ENCODE measurements at regions of chr5 and their contacts with region 1.

Region 1: DNA sequence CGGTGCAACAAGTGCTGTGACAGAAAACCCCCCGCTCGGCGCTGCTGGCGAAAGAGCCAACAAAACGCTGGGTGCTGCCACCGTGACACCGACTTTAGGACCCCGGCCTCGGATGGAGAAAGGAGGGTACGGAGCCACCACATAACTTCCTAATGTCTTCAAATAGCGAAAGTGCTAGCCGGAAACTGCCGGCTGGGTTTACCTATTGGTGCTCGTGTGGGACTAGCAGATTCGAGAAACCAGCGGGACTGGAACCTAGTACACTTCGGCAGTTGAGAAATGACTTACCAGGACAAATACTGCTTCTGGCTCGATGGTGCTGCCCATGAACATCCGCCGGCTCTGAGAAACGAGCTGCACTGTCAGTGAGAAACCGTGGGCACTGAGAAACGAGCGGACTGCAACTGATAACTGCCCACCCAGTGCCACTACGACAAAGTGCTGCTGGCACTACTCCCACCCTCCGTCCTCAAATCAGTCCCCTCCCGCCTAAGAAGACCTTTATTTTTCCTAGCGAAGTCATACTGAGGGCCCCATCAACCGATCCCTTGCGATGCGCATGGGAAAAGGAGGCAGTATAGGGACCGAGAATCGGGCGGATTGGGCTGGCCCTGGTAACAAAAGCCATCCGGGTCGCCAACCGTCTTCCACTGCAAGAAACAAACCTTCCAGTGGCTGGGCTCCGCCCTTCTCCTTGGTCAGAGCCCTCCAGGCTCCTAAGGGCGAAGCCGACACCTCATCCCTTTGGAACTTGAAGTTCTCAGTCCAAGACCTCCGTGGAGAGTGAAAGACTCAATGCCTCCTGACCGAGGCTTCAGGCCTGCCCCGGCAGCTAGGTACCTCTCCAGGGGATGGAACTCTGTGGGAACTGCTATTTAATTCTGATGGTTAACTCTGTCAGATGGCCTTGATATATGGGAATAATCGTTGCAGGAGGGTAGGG is 27.0 kb upstream of the ANXA2R start:
- DNase-seq: peak; percentile 83 to 93
- ATAC-seq: peak; percentile 68 to 84 (median 72)
- H3K4me3 ChIP-seq: peak overlapping the region; percentile 70 to 93 (median 80)
- H3K27ac ChIP-seq: peak overlapping the region; percentile 98 to 100 (median 100)
- H3K4me1 ChIP-seq: peaks cover 6 to 49% (median 32%) of the 10 kb centered on the region in 9 donors
- H3K27me3 ChIP-seq: no peaks in the 10 kb centered on the region
- CTCF ChIP-seq: peak in 1 of 9 donors; percentile 16

Region 2: DNA sequence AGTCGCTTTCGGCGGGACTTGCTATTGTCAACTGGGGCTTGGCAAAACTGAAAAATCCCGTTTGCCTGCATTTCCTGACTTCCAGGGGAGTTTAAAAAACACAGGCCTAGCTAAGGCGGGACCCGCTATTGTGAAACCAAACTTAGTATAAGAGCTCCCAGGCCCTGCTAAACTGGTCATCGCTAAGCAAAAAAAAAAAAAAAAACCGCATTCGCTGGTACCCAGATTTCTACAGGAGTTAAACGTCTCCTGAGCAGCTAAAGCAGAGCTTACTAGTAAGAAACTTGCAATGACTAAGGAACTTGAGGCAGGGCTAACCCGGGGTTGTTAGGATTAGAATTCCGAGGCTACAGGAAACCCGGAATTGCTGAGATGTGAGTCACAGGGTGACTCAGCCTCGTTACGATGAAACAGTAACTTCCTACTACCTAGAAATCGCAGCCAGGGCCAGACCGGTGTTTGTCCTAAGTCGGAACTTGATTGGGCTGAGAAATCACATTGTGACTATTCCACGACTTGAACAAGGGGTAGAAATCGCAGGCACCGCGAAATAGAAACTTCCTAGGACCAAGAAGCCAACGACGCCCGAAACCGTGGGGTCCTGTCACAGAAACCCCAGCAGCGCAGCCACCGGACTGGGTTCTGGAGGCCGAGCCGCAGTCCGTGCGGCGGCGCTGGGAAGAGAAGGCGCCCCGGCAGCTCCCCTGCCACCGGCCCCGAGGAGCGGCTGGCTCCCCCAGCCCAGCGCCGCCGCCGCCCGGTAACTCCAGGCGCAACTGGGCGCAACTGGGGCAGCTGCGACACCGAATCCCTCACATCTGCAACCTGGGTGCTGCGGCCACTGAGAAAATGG is 116.4 kb before region 1 on chr5:
- intact Hi-C with region 1: loop called in 1 of 10 experiments (anchors 2 kb)
- DNase-seq: peak; percentile 29 to 81
- ATAC-seq: peak; percentile 82 to 92 (median 86)
- H3K4me3 ChIP-seq: peak overlapping the region; percentile 32 to 74 (median 60)
- H3K27ac ChIP-seq: peak overlapping the region; percentile 78 to 99 (median 94)
- H3K4me1 ChIP-seq: peaks cover 0 to 50% (median 25%) of the 10 kb centered on the region in 9 donors
- H3K27me3 ChIP-seq: peaks cover 12 to 99% (median 89%) of the 10 kb centered on the region in 7 donors
- CTCF ChIP-seq: no peak

Region 3: DNA sequence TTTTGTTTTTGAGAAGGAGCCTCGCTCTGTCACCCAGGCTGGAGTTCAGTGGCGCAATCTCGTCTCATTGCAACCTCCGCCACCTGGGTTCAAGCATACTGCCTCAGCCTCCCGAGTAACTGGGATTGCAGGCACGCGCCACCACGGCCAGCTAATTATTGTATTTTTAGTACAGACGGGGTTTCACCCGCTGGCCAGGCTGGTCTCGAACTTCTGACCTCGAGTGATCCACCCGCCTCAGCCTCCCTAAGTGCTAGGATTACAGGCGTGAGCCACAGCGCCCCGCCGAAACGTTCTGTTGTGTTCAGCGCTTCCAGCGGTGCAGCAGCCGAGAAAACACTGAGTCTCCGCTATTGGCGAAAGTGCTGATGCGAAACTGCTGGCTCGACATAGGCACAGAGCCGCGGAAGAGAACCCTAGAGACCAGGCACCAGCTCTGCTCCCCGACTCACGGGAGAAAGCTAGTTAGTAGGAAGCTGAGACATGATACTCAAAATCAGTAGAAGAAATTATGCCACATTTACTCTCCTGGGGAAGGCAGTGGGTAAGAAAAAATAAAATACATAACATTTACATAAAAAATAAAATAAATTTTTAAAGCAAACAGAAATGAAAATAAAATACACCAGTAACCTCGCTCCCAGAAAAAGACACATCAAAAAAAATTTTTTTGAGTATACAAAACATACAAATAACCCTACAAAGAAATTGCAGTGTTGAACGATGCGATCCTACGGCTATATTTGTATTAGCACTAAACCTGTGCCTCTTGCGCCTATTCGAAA is 58.5 kb before region 1 on chr5:
- intact Hi-C with region 1: loop called in 1 of 10 experiments (anchors 2 kb)
- DNase-seq: peak; percentile 85 to 92
- ATAC-seq: peak; percentile 81 to 93 (median 88)
- H3K4me3 ChIP-seq: peak overlapping the region; percentile 34 to 67 (median 55)
- H3K27ac ChIP-seq: peak overlapping the region; percentile 72 to 97 (median 90)
- H3K4me1 ChIP-seq: peaks cover 0 to 43% (median 10%) of the 10 kb centered on the region in 9 donors
- H3K27me3 ChIP-seq: peaks cover 0 to 74% (median 57%) of the 10 kb centered on the region in 7 donors
- CTCF ChIP-seq: peak in 1 of 9 donors; percentile 17

Region 4: GRCh38 chr5:43040287-43041098 is 26.6 kb before region 1 on chr5 and contains the start of gene ANXA2R:
- intact Hi-C with region 1: loop called in 6 of 10 experiments (anchors 1 to 2 kb)
- DNase-seq: peak; percentile 80 to 91
- ATAC-seq: peak; percentile 59 to 74 (median 66)
- H3K4me3 ChIP-seq: peak within 1 kb of the TSS; percentile 47 to 73 (median 67)
- H3K27ac ChIP-seq: peak within 1 kb of the TSS; percentile 93 to 98 (median 96)
- H3K4me1 ChIP-seq: peaks cover 0 to 75% (median 17%) of the 10 kb centered on the region in 9 donors
- H3K27me3 ChIP-seq: peaks cover 0 to 73% (median 35%) of the 10 kb centered on the region in 7 donors
- CTCF ChIP-seq: peak; percentile 64 to 87 (median 79)
- total RNA-seq, gene ANXA2R: 0.42 to 1.8 (median 0.87) TPM

Region 5: GRCh38 chr5:43120720-43121564 is 53.9 kb after region 1 on chr5 and contains the start of gene ZNF131:
- intact Hi-C with region 1: loop called in 3 of 10 experiments (anchors 2 to 5 kb)
- DNase-seq: peak; percentile 95 to 97
- ATAC-seq: peak; percentile 98 to 100 (median 99)
- H3K4me3 ChIP-seq: peak within 1 kb of the TSS; percentile 73 to 97 (median 88)
- H3K27ac ChIP-seq: peak within 1 kb of the TSS; percentile 86 to 100 (median 97)
- H3K4me1 ChIP-seq: peaks cover 3 to 56% (median 29%) of the 10 kb centered on the region in 9 donors
- H3K27me3 ChIP-seq: no peaks in the 10 kb centered on the region
- CTCF ChIP-seq: no peak
- total RNA-seq, gene ZNF131: 13.4 to 20.6 (median 16.8) TPM

Measured in heart right ventricle (tissue), 16 donors.